ENCODE measurements at regions of chrX and their contacts with region 1.

Region 1: GRCh38 chrX:14598330-14598729 is 69.0 kb downstream of the GLRA2 start:
- DNase-seq: no peak
- H3K4me3 ChIP-seq: no peak overlapping the region
- CTCF ChIP-seq: no peak
- POLR2A ChIP-seq: no peak

Region 2: DNA sequence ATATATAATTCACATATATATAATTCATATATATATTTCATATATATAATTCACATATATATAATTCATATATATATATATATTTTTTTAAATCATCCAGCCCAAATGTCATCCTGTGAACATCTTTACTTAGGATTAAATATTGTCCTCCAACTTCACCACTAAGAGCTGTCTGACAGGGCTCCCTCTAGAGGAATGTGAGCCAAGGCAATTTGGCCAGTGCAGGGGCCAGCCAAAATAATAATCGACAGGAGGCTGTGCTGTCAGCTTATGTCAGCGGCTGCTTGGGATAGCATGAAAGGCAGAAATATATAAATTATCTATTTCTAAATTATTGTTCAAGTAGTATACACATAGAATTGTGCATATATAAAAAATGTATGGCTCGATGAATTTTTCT is 999.5 kb before region 1 on chrX:
- intact Hi-C with region 1: no loop called
- DNase-seq: no peak
- H3K4me3 ChIP-seq: no peak overlapping the region
- CTCF ChIP-seq: no peak
- POLR2A ChIP-seq: no peak

Region 3: GRCh38 chrX:15579778-15580747 is 981.7 kb after region 1 on chrX:
- intact Hi-C with region 1: loop called (anchors 5 kb)
- DNase-seq: no peak
- H3K4me3 ChIP-seq: no peak overlapping the region
- CTCF ChIP-seq: no peak
- POLR2A ChIP-seq: no peak

Region 4: DNA sequence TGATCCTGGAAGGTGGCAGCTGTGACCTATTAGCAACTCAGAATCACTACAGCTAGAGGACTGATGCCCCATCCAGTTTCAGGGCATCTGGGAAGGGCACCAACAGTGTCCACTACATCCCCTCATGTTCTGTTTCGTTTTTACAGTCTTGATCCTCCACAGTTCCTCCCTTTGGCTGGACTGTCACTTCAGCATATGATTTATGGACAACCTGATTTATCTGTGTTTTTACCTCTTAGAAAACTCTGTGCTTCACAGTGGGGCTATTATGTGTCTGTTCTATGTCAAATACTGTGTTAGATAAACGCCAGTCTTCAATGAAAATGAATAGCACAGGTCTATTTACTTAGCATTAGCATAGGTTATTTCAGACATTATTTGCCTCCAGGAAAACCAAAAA is 1461.9 kb after region 1 on chrX:
- intact Hi-C with region 1: no loop called
- DNase-seq: no peak
- H3K4me3 ChIP-seq: no peak overlapping the region
- CTCF ChIP-seq: no peak
- POLR2A ChIP-seq: no peak

Measured in lower leg skin (tissue), 4 donors.